Activated CD4-positive, alpha-beta T cell treated with anti-CD3 and anti-CD28 coated beads, Interleukin-2, amount 10 ng/mL, durations not matched to agents 24 days and 14 days (primary cell): ENCODE measurements at regions of chr18 and their contacts with region 1.

Region 1: GRCh38 chr18:76756531-76757253 is 65.7 kb upstream of the ZNF236 start:
- DNase-seq: no peak
- H3K4me3 Mint-ChIP-seq: no peak overlapping the region
- H3K27ac Mint-ChIP-seq: no peak overlapping the region
- H3K4me1 Mint-ChIP-seq: peaks cover 7% of the 10 kb centered on the region
- H3K27me3 Mint-ChIP-seq: peaks cover 7% of the 10 kb centered on the region

Region 2: DNA sequence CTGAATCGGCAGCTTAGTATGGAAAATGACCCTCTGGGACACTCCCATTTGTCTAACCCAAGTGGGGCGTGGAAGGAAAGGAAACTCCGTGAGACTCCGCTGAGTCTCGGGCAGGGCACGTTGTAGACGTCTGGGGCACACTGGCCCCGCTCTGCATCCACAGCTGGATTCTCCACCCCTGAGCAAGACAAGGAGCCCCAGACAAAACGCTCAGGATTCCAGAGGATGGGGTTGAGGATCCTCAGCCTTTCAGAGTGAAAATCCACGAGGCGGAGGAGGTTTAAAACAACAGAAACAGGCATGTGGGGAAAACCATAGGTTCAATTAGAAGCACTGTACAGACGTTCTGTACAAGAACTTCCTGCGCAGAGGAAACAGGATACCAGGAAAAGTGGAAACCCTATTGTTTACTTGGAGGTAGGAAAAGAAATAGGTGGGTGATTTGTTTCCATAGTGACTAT is 59.2 kb before region 1 on chr18:
- intact Hi-C with region 1: no loop called
- DNase-seq: no peak
- H3K4me3 Mint-ChIP-seq: no peak overlapping the region
- H3K27ac Mint-ChIP-seq: no peak overlapping the region
- H3K4me1 Mint-ChIP-seq: peaks cover 3% of the 10 kb centered on the region
- H3K27me3 Mint-ChIP-seq: peaks cover 48% of the 10 kb centered on the region

Region 3: DNA sequence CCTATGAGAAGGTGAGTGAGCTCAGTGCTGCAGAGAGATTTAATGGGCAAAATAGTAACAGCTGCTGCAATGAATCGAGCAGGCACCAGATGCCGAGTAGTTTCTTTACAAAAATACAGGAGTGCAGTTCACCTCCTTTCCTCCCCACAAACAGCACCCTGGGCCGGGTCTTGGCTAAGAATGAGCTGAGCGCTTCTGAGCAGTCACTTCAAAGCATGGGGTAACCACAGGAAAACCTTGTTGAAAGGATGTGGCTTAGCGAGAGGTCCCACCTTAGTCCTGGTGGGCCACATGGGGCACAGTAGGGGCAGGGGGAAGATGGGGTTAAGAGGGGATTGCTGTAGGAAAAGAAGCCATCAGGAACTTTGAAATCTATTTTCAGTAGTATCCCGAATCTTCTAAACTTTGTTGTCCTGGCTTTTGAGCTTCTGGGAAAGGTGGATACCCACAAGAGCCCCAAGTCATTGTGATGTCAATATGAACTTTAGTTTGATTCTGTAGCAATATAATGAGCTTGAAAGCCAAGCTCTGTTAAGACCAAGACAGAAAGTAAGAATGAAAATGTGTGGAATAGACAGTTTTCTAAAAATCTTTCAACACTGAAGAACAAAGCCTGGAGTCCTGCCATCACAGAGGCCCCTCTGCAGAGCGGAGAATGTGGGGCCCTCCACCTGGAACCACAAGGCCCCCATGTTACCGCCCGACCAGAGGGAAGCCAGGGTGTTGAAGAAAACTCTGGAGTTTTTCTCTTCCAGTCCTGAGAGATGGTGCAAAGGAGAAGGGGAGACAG is 35.3 kb before region 1 on chr18:
- intact Hi-C with region 1: loop called (anchors 5 kb)
- DNase-seq: peak; percentile 96
- H3K4me3 Mint-ChIP-seq: peak overlapping the region; percentile 65
- H3K27ac Mint-ChIP-seq: peak overlapping the region; percentile 65
- H3K4me1 Mint-ChIP-seq: peaks cover 56% of the 10 kb centered on the region
- H3K27me3 Mint-ChIP-seq: peaks cover 14% of the 10 kb centered on the region